Activated naive CD4-positive, alpha-beta T cell treated with anti-CD3 and anti-CD28 coated beads, Interleukin-2, amount 10 ng/mL, durations not matched to agents 7 days and 5 days (primary cell): ENCODE measurements at regions of chr1 and their contacts with region 1.

Region 1: GRCh38 chr1:64242895-64243756 is 39.7 kb downstream of the UBE2U start:
- DNase-seq: no peak
- H3K4me3 Mint-ChIP-seq: peak overlapping the region; percentile 4
- H3K27ac Mint-ChIP-seq: no peak overlapping the region
- H3K4me1 Mint-ChIP-seq: peaks cover 27% of the 10 kb centered on the region
- H3K27me3 Mint-ChIP-seq: peaks cover 15% of the 10 kb centered on the region

Region 2: DNA sequence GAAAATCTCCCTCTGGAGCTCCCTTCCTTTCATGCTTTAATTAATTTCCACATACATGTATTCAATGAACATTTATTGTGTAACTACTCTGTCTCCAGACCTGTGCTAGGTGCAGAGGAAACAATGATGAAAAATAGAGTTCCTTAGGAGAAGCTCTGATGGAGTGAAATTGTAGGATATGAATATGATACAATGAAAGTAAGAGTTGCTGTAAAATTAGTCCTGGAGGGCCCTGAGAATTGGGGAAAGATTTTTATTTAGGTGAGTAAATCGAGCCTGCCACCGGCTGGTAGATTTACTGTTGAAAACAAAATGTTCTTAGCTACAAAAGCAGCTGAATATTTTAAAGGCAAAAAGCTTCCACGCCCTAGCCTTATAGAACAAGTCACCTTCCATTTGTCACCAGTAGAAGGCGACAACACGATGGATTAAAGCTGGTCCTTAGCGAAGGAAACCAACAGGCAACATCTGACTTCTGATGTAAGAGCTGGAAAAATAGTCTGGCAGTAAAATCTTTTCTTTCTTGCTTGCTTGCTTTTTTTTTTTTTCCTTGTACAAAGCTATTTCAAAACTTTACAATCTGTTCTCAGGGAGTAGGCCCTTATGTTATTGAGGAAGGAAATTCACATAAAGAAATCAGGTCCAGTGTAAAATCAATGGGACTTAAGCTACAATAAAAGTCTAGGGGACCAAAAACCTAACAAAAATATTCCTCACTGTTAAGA is 551.3 kb before region 1 on chr1:
- CTCF ChIA-PET with region 1: interaction called, 25 read pairs
- DNase-seq: peak; percentile 52
- H3K4me3 Mint-ChIP-seq: no peak overlapping the region
- H3K27ac Mint-ChIP-seq: no peak overlapping the region
- H3K4me1 Mint-ChIP-seq: no peaks in the 10 kb centered on the region
- H3K27me3 Mint-ChIP-seq: no peaks in the 10 kb centered on the region

Region 3: DNA sequence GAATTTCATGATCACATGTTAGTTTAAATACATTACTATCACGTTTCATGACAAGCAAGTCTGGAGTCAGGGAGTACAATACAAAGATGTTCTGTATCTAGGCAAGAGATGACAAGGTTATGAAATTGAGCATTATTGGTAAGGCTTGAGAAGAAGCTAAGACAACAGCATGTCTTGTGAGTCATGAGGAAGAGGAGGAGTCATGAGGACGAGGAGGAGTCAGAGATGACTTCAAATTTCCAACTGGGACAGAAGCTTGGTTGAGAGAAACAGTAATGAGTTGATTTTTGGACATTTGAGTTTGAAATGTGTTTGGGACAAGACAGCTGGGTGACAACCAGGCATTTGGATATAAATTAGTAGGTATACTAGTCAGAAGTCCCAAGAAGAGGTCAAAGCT is 44.0 kb before region 1 on chr1:
- CTCF ChIA-PET with region 1: no interaction called
- DNase-seq: no peak
- H3K4me3 Mint-ChIP-seq: no peak overlapping the region
- H3K27ac Mint-ChIP-seq: no peak overlapping the region
- H3K4me1 Mint-ChIP-seq: no peaks in the 10 kb centered on the region
- H3K27me3 Mint-ChIP-seq: peaks cover 3% of the 10 kb centered on the region

Region 4: GRCh38 chr1:64487061-64487460 is 243.9 kb after region 1 on chr1:
- CTCF ChIA-PET with region 1: no interaction called
- DNase-seq: no peak
- H3K4me3 Mint-ChIP-seq: no peak overlapping the region
- H3K27ac Mint-ChIP-seq: no peak overlapping the region
- H3K4me1 Mint-ChIP-seq: no peaks in the 10 kb centered on the region
- H3K27me3 Mint-ChIP-seq: peaks cover 12% of the 10 kb centered on the region

Region 5: GRCh38 chr1:64755361-64755760 is 512.2 kb after region 1 on chr1:
- CTCF ChIA-PET with region 1: no interaction called
- DNase-seq: no peak
- H3K4me3 Mint-ChIP-seq: no peak overlapping the region
- H3K27ac Mint-ChIP-seq: no peak overlapping the region
- H3K4me1 Mint-ChIP-seq: no peaks in the 10 kb centered on the region
- H3K27me3 Mint-ChIP-seq: no peaks in the 10 kb centered on the region